Activated CD4-positive, alpha-beta T cell treated with anti-CD3 and anti-CD28 coated beads, Interleukin-2, amount 10 ng/mL, durations not matched to agents 24 days and 14 days (primary cell): ENCODE measurements at regions of chr6 and their contacts with region 1.

Region 1: DNA sequence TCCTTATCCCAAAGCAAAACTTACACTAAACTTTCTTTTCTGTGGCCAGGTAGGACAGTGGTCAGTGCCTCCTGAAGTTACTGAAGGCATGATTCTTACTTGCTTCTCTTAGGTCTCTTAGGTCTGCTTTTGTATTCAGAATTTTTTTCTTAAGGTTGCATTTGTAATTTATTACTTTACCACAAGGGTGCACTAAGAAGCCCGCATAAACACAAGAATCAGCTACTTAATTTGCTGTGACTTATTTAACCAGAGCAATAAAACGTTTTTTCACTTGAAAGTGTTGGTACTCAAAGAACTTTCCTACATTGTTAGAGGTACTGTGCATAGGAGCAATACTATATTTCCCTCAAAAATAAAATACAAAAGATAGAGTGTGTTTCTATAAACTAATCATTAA is 75.4 kb upstream of the LAMA2 start:
- DNase-seq: no peak
- H3K4me3 Mint-ChIP-seq: no peak overlapping the region
- H3K27ac Mint-ChIP-seq: no peak overlapping the region
- H3K4me1 Mint-ChIP-seq: no peaks in the 10 kb centered on the region
- H3K27me3 Mint-ChIP-seq: no peaks in the 10 kb centered on the region

Region 2: GRCh38 chr6:127366281-127367022 is 1441.1 kb before region 1 on chr6:
- intact Hi-C with region 1: no loop called
- DNase-seq: peak; percentile 40
- H3K4me3 Mint-ChIP-seq: no peak overlapping the region
- H3K27ac Mint-ChIP-seq: no peak overlapping the region
- H3K4me1 Mint-ChIP-seq: no peaks in the 10 kb centered on the region
- H3K27me3 Mint-ChIP-seq: no peaks in the 10 kb centered on the region

Region 3: DNA sequence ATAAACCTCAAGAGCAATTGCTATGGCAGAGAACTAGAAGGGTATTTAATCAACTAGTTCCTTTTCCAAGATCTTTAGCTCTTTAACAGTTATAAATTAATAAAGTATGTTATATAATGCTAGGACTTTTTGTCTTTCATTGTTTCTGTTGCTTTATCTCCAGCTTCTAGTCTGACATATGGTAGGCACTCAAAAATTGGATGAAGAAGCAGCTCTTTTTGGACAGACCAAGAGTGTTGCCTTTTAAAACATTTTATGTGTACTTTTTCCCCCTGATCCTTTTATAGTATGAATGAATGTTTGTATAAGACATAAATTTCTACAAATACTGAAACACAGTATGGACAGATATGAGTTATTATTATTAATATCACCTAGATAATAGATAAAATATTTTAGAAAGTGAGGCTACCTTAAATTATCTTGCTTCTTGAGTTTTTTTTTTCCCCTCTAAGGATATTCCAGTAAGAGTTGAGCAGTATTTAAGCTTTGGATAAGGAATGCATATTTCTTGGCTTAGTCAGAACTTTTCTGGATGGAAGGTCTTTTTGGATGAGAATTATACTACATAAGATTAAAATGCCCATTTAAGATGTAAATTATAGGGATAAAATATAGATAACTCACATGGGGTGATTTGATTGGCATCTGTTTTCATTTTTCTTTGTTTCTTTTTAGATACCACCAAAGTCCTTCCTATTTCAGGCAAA is 91.9 kb after region 1 on chr6:
- intact Hi-C with region 1: no loop called
- DNase-seq: no peak
- H3K4me3 Mint-ChIP-seq: no peak overlapping the region
- H3K27ac Mint-ChIP-seq: no peak overlapping the region
- H3K4me1 Mint-ChIP-seq: no peaks in the 10 kb centered on the region
- H3K27me3 Mint-ChIP-seq: no peaks in the 10 kb centered on the region

Region 4: DNA sequence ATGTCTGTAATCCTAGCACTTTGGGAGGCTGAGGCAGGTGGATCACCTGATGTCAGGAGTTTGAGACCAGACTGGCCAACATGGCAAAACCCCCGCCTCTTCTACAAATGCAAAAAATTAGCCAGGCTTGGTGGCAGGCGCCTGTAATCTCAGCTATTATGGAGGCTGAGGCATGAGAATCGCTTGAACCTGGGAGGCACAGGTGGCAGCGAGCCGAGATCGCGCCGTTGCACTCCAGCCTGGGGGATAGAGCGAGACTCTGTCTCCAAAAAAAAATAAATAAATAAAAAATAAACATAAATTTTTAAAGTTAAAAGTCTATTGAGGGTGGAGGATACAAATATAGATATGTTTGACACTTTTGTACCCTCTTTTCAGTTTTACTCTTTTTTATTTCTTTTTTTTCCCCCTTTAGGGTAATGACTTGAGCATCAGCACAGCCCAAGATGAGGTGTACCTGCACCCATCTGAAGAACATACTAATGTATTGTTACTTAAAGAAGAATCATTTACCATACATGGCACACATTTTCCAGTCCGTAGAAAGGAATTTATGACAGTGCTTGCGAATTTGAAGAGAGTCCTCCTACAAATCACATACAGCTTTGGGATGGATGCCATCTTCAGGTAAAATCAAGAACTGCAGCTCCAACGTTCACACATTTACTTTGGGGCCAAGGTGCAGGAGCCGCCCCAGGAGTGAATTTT is 444.2 kb after region 1 on chr6:
- intact Hi-C with region 1: loop called (anchors 5 kb)
- DNase-seq: peak; percentile 85
- H3K4me3 Mint-ChIP-seq: no peak overlapping the region
- H3K27ac Mint-ChIP-seq: no peak overlapping the region
- H3K4me1 Mint-ChIP-seq: peaks cover 10% of the 10 kb centered on the region
- H3K27me3 Mint-ChIP-seq: peaks cover 25% of the 10 kb centered on the region